A673 (cell line): ENCODE measurements at regions of chr4 and their contacts with region 1.

Region 1: DNA sequence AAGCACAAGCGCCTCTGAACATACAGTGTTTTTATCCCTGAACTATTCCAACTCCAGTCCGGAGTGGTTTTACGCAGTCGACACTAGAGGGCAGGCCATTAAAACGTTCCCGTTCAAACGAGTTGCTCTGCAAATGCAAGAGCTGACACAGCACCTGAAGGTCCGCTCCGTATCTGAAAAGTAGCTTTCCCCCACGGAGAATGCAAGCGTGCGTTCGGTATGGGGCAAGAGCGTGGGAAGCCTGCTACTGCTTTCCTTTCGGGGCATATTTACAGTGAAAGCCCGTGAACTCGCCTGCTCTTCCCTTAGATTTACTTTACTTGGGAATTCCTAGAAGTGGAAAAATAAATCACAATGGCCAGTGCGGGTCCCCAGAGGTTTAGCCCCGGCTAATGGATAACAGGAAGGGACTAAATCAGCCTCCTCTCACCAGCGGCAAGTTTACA is 190.8 kb downstream of the TSPAN5 start:
- DNase-seq: peak; percentile 92
- H3K4me3 ChIP-seq: peak overlapping the region; percentile 41
- H3K27ac ChIP-seq: no peak overlapping the region
- H3K4me1 ChIP-seq: peaks cover 11% of the 10 kb centered on the region
- H3K27me3 ChIP-seq: no peaks in the 10 kb centered on the region
- CTCF ChIP-seq: peak; percentile 87

Region 2: DNA sequence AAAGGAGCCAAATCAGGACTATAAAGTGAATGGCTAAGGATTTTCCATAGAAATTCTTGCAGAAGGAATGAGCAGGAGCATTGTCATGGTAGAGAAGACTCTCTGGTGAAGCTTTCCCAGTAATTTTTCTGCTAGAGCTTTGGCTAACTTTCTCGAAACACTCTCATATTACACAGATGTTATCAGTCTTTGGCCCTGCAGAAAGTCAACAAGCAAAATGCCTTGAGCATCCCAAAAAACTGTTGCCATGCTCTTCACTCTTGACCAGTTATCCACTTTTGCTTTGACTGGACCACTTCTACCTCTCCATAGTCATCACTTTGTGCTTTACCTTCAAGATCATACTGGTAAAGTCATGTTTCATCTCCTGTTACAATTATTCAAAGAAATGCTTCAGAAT is 853.3 kb before region 1 on chr4:
- CTCF ChIA-PET with region 1: no interaction called
- POLR2A ChIA-PET with region 1: no interaction called
- intact Hi-C with region 1: no loop called
- DNase-seq: no peak
- H3K4me3 ChIP-seq: no peak overlapping the region
- H3K27ac ChIP-seq: no peak overlapping the region
- H3K4me1 ChIP-seq: no peaks in the 10 kb centered on the region
- H3K27me3 ChIP-seq: no peaks in the 10 kb centered on the region
- CTCF ChIP-seq: no peak

Region 3: GRCh38 chr4:98150092-98150761 is 317.4 kb before region 1 on chr4:
- CTCF ChIA-PET with region 1: no interaction called
- POLR2A ChIA-PET with region 1: no interaction called
- intact Hi-C with region 1: loop called (anchors 10 kb)
- DNase-seq: no peak
- H3K4me3 ChIP-seq: no peak overlapping the region
- H3K27ac ChIP-seq: no peak overlapping the region
- H3K4me1 ChIP-seq: peaks cover 31% of the 10 kb centered on the region
- H3K27me3 ChIP-seq: no peaks in the 10 kb centered on the region
- CTCF ChIP-seq: peak; percentile 56; the same call in 1 of the 2 replicates

Region 4: DNA sequence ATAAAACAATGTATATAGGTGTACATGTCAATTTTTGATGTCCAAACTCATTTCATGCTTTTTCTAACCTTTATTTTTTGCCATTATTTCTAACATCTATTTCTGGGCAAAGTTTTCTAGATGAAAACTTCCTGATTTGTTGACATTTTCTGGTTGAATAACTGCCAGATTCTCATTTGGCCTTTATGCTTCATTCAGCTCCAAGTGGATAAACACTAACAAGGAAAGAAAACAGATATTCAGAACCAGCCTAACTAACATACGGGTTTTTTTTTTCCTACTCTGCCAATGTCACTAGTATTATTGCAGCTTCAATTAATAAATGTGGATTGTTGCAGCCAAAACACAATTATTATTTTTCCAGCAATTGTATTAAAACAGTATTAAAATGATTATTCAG is 257.4 kb before region 1 on chr4:
- CTCF ChIA-PET with region 1: no interaction called
- POLR2A ChIA-PET with region 1: no interaction called
- intact Hi-C with region 1: no loop called
- DNase-seq: no peak
- H3K4me3 ChIP-seq: no peak overlapping the region
- H3K27ac ChIP-seq: no peak overlapping the region
- H3K4me1 ChIP-seq: no peaks in the 10 kb centered on the region
- H3K27me3 ChIP-seq: no peaks in the 10 kb centered on the region
- CTCF ChIP-seq: no peak

Region 5: GRCh38 chr4:98612318-98613250 is 144.9 kb after region 1 on chr4:
- CTCF ChIA-PET with region 1: no interaction called
- POLR2A ChIA-PET with region 1: no interaction called
- intact Hi-C with region 1: no loop called
- DNase-seq: no peak
- H3K4me3 ChIP-seq: no peak overlapping the region
- H3K27ac ChIP-seq: no peak overlapping the region
- H3K4me1 ChIP-seq: peaks cover 13% of the 10 kb centered on the region
- H3K27me3 ChIP-seq: no peaks in the 10 kb centered on the region
- CTCF ChIP-seq: no peak

Region 6: GRCh38 chr4:98658287-98659105 is 190.8 kb after region 1 on chr4 and contains the start of gene TSPAN5:
- CTCF ChIA-PET with region 1: interaction called, 4 read pairs
- POLR2A ChIA-PET with region 1: no interaction called
- intact Hi-C with region 1: loop called (anchors 5 kb)
- DNase-seq: peak; percentile 88
- H3K4me3 ChIP-seq: peak within 1 kb of the TSS; percentile 67
- H3K27ac ChIP-seq: peak within 1 kb of the TSS; percentile 41
- H3K4me1 ChIP-seq: no peaks in the 10 kb centered on the region
- H3K27me3 ChIP-seq: no peaks in the 10 kb centered on the region
- CTCF ChIP-seq: no peak
- total RNA-seq, gene TSPAN5: 15.2 and 16.9 TPM in 2 replicates

Region 7: DNA sequence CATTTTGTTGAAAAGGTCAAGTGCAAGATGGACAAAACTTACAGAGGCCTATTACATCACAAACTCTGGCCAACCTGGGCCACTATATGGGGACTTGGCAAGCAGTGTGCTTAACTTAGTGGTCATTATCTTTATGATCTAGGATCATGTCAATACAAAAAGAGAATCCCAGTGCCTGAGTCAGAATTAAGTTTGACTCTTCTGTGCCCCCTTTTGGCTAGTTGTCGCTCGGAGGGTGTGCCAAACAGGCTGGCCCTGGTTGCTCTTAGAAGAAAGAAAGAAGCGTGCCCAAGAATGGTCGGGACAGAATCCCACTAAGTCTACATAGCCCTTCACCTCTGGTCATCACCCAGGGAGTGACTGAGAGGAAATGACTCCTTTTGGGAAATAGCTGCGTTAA is 361.2 kb after region 1 on chr4:
- CTCF ChIA-PET with region 1: no interaction called
- POLR2A ChIA-PET with region 1: no interaction called
- intact Hi-C with region 1: loop called (anchors 5 kb)
- DNase-seq: peak; percentile 66
- H3K4me3 ChIP-seq: no peak overlapping the region
- H3K27ac ChIP-seq: no peak overlapping the region
- H3K4me1 ChIP-seq: peaks cover 23% of the 10 kb centered on the region
- H3K27me3 ChIP-seq: no peaks in the 10 kb centered on the region
- CTCF ChIP-seq: peak; percentile 62

Region 8: DNA sequence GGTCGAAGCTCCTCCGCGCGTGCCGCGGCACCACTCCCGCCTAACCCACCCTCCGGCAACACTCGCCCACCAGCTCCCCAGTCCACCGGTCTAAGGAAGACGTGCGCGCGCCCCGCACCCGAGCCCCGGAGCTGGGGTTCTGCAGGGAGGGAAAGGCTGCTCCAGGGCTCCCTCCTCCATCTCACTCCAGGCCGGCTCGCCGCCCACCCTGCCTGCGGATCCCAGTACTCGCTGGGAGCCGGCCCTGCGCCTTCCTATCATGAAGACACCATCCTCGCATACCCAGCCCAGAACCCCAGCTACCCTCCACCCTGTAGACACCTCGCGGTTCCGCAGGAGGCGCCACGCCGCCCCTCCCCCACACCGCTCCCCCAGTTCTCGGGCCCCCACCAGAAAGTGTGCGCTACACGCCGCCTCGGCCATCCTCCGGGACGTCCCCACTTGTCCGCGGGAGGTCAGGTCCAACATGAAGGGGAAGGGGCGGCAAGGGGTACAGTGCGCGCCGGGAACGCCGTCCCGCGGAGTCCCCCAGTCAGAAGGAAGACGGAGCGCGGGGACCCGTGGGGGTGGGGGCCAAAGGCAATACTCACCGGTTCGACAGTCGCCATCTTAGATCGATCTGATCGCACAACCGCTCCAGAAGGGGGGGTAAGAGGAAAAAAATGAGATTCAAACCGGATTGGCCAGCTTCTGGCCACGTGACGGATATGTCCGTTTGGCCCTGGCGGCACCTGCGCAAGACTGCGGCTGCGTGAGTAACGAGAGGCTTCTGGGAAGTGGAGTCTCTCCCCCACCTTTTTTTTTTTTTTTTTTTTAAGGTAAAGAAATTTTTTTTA is 461.1 kb after region 1 on chr4 and contains the start of gene EIF4E:
- CTCF ChIA-PET with region 1: no interaction called
- POLR2A ChIA-PET with region 1: no interaction called
- intact Hi-C with region 1: loop called (anchors 10 kb)
- DNase-seq: peak; percentile 99
- H3K4me3 ChIP-seq: peak within 1 kb of the TSS; percentile 91
- H3K27ac ChIP-seq: peak within 1 kb of the TSS; percentile 92
- H3K4me1 ChIP-seq: peaks cover 7% of the 10 kb centered on the region
- H3K27me3 ChIP-seq: no peaks in the 10 kb centered on the region
- CTCF ChIP-seq: 0 out of 2 replicates have a peak, but pooled peaks have one; percentile 37
- total RNA-seq, gene EIF4E: 154 and 179 TPM in 2 replicates

Region 9: GRCh38 chr4:99100876-99101275 is 633.2 kb after region 1 on chr4:
- CTCF ChIA-PET with region 1: no interaction called
- POLR2A ChIA-PET with region 1: no interaction called
- intact Hi-C with region 1: no loop called
- DNase-seq: no peak
- H3K4me3 ChIP-seq: no peak overlapping the region
- H3K27ac ChIP-seq: no peak overlapping the region
- H3K4me1 ChIP-seq: peaks cover 4% of the 10 kb centered on the region
- H3K27me3 ChIP-seq: no peaks in the 10 kb centered on the region
- CTCF ChIP-seq: no peak

Region 10: DNA sequence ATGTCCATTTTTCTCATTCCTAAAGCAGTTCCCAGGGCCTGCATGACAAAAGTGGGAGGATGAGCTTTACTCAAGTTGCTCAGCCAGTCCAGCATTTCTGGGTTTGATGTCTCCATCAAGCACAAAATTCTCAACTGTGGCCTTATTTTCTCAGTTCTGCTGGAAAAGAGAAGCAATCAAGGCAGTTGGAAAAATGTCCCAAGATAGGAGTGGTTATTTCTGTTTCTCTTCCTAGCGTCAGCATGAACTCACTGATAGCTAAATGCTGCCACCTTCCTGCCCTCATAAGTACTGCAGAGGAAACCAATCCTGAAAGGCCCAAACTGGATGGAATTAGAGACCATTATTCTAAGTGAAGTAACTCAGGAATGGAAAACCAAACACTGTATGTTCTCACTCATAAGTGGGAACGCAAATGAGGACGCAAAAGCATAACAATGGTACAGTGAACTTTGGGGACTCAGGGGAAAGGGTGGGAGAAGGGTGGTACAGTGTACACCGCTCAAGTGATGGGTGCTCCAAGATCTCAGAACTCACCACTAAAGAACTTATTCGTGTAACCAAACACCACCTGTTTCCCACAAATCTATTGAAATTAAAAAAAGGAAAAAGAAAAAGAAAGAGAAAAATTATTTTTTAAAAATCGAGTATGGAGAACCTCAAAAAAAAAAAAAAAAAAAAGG is 937.9 kb after region 1 on chr4:
- CTCF ChIA-PET with region 1: no interaction called
- POLR2A ChIA-PET with region 1: no interaction called
- intact Hi-C with region 1: loop called (anchors 10 kb)
- DNase-seq: peak; percentile 70
- H3K4me3 ChIP-seq: no peak overlapping the region
- H3K27ac ChIP-seq: no peak overlapping the region
- H3K4me1 ChIP-seq: no peaks in the 10 kb centered on the region
- H3K27me3 ChIP-seq: no peaks in the 10 kb centered on the region
- CTCF ChIP-seq: peak; percentile 85